Posterior vena cava (tissue), 2 donors: ENCODE measurements at regions of chr18 and their contacts with region 1.

Region 1: GRCh38 chr18:36572135-36572856 is 256.5 kb downstream of the TPGS2 start:
- DNase-seq: no peak

Region 2: DNA sequence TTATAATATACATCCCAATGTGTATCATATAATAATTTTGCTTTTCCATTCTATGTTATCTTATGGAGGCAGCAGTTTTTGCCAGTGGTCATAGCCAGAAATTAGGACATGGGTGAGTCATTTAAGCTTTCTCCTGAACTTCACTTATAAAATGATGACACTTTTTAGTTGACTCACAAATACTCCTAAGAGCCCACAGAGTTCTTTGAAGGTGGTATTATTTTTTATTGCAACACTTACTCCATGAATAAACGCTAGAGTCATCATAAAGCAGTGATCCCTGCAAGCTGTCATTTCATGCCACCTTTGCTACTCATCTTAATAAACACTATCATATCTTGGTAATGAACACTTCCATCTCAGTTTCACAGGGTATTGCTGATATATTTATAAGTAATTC is 1601.0 kb before region 1 on chr18:
- intact Hi-C with region 1: no loop called
- DNase-seq: no peak

Region 3: DNA sequence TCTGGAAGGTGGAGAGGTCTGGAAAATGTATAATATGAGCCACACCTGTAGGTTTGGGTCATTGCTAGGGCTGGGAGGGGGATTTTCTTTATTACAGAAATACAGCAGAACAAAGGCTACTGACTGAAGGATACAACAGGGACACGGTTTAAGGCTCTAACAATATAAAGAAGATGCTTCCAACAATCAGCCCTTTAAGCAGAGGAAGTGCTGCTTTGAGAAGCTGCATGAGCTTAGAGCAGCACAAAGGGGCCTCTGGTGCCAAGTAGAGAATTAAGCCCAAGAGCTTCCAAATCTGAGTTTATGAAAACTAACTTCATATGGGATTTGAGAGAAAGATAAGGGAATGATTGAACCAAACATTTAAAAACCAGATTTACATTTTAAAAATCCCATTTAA is 774.3 kb before region 1 on chr18:
- intact Hi-C with region 1: no loop called
- DNase-seq: no peak

Region 4: GRCh38 chr18:35875566-35875965 is 696.7 kb before region 1 on chr18:
- intact Hi-C with region 1: no loop called
- DNase-seq: no peak

Region 5: DNA sequence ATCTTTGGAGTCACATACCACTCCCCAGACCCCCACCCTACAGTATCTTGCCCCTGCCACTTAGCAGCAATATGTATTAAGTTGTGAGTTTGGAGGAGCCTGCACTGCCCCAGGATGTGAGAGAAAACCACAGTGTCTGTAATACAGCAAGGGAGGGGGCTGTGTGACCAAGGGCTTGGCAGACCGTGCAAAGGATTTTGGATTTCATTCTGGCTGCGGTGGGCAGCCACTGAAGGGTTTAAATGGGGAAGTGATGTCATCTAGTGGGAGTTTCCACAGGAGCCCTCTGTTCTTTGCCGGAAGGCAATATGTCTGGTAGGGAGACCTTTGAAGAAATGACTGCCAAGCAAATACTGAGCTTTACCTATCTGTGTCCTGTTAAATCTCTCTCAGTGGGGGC is 72.4 kb before region 1 on chr18:
- intact Hi-C with region 1: loop called in 1 of 2 experiments (anchors 10 kb)
- DNase-seq: no peak